ENCODE measurements at regions of chr5 and their contacts with region 1.

Region 1: GRCh38 chr5:149114403-149115312 is 26.6 kb upstream of the ABLIM3 start:
- DNase-seq: peak; percentile 20 to 73 (median 28)
- ATAC-seq: peak; percentile 100
- H3K4me3 ChIP-seq: no peak overlapping the region
- H3K27ac ChIP-seq: no peak overlapping the region
- H3K4me1 ChIP-seq: no peaks in the 10 kb centered on the region
- H3K27me3 ChIP-seq: peaks cover 0 to 5% of the 10 kb centered on the region in 2 experiments; a peak in 1 of 5 replicates
- CTCF ChIP-seq: peak; percentile 78 to 87 (median 80)
- EP300 ChIP-seq: no peak
- POLR2A ChIP-seq: no peak
- RAD21 ChIP-seq: peak; percentile 94 to 95

Region 2: DNA sequence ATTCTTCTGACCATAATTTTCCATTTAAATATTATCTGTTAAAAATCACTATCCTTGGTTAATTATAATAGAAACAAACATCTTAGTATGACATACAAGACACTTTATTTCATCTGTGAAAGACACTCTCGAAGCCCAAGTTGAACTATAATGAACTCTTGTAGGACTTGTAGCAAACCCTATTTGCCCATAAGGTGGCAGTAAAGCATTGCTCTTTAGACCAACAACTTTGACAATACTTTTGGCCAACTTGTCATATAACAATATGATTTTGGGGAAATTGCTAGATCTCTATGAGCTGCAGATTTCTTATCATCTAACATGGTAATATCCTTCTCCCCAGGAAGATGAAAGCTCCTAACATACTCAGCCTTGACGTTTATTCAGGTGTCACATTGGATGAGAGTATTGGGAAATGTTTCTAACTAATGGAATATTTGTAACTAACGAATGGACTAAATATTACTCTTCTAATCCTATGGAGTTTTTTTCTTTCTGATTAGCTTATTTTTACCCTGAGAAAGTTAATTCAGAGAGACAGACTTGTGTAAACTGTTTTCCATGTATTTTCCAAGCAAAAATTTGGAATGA is 935.3 kb before region 1 on chr5:
- CTCF ChIA-PET with region 1: no interaction called
- POLR2A ChIA-PET with region 1: no interaction called
- in situ Hi-C with region 1: no loop called
- intact Hi-C with region 1: loop called (anchors 10 kb)
- DNase-seq: peak in 3 of 4 experiments; percentile 6 to 67 (median 6)
- ATAC-seq: peak; percentile 67; the same call in 2 of the 3 replicates
- H3K4me3 ChIP-seq: no peak overlapping the region
- H3K27ac ChIP-seq: no peak overlapping the region
- H3K4me1 ChIP-seq: no peaks in the 10 kb centered on the region
- H3K27me3 ChIP-seq: no peaks in the 10 kb centered on the region
- CTCF ChIP-seq: peak; percentile 48 to 71 (median 61); a peak in 5 of 6 replicates
- EP300 ChIP-seq: no peak
- POLR2A ChIP-seq: no peak
- RAD21 ChIP-seq: peak; percentile 89

Region 3: GRCh38 chr5:148904440-148904839 is 210.2 kb before region 1 on chr5:
- CTCF ChIA-PET with region 1: no interaction called
- POLR2A ChIA-PET with region 1: no interaction called
- in situ Hi-C with region 1: loop called (anchors 10 kb)
- intact Hi-C with region 1: no loop called
- DNase-seq: no peak
- ATAC-seq: no peak
- H3K4me3 ChIP-seq: no peak overlapping the region
- H3K27ac ChIP-seq: no peak overlapping the region
- H3K4me1 ChIP-seq: no peaks in the 10 kb centered on the region
- H3K27me3 ChIP-seq: peaks cover 0 to 3% of the 10 kb centered on the region in 2 experiments; a peak in 2 of 5 replicates
- CTCF ChIP-seq: no peak
- EP300 ChIP-seq: no peak
- POLR2A ChIP-seq: no peak
- RAD21 ChIP-seq: no peak

Region 4: GRCh38 chr5:148963664-148964063 is 151.0 kb before region 1 on chr5:
- CTCF ChIA-PET with region 1: no interaction called
- POLR2A ChIA-PET with region 1: no interaction called
- in situ Hi-C with region 1: no loop called
- intact Hi-C with region 1: loop called (anchors 5 kb)
- DNase-seq: no peak
- ATAC-seq: no peak
- H3K4me3 ChIP-seq: no peak overlapping the region
- H3K27ac ChIP-seq: no peak overlapping the region
- H3K4me1 ChIP-seq: no peaks in the 10 kb centered on the region
- H3K27me3 ChIP-seq: peaks cover 3 to 6% of the 10 kb centered on the region in 2 experiments; a peak in 4 of 5 replicates
- CTCF ChIP-seq: no peak
- EP300 ChIP-seq: no peak
- POLR2A ChIP-seq: no peak
- RAD21 ChIP-seq: no peak

Region 5: DNA sequence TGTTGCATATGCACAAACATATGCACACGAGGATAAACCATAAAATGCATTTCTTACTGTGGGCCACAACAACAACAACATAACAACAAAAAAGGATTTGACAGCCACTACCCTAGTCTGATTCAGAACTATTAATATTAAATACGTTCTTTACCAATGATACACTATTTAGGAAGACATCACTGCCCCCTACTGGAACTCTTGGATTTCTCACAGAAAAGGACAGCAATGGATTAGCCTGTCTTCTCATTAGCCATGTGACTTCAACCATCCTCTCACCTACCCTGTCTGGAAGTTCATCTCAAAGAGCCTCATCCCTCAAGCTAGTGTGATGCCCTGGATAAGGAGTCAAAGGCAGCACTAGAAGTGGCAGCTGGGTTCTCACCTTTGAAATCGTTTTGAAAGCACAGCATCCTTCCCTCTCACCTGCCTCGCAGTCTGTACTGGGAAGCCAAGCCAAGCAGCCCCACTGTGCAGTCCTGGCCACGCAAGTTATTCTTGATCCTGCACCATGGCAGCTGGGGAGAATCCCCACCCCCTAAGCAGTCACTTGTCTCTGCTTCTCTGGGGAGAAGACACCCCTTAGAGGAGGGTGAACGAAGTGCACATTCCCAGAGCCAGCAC is 116.4 kb before region 1 on chr5:
- CTCF ChIA-PET with region 1: no interaction called
- POLR2A ChIA-PET with region 1: no interaction called
- in situ Hi-C with region 1: no loop called
- intact Hi-C with region 1: loop called (anchors 2 kb)
- DNase-seq: peak; percentile 16 to 51 (median 21)
- ATAC-seq: peak; percentile 87
- H3K4me3 ChIP-seq: no peak overlapping the region
- H3K27ac ChIP-seq: no peak overlapping the region
- H3K4me1 ChIP-seq: no peaks in the 10 kb centered on the region
- H3K27me3 ChIP-seq: no peaks in the 10 kb centered on the region
- CTCF ChIP-seq: peak; percentile 48 to 70 (median 57); a peak in 5 of 6 replicates
- EP300 ChIP-seq: no peak
- POLR2A ChIP-seq: no peak
- RAD21 ChIP-seq: peak; percentile 61 to 67

Region 6: GRCh38 chr5:149035372-149035790 is 79.3 kb before region 1 on chr5:
- CTCF ChIA-PET with region 1: no interaction called
- POLR2A ChIA-PET with region 1: no interaction called
- in situ Hi-C with region 1: no loop called
- intact Hi-C with region 1: loop called (anchors 2 kb)
- DNase-seq: peak; percentile 52 to 74 (median 56)
- ATAC-seq: peak; percentile 99
- H3K4me3 ChIP-seq: no peak overlapping the region
- H3K27ac ChIP-seq: no peak overlapping the region
- H3K4me1 ChIP-seq: no peaks in the 10 kb centered on the region; a peak in 1 of 5 replicates
- H3K27me3 ChIP-seq: peaks cover 0 to 16% of the 10 kb centered on the region in 2 experiments; a peak in 3 of 5 replicates
- CTCF ChIP-seq: peak; percentile 84 to 90 (median 90)
- EP300 ChIP-seq: no peak
- POLR2A ChIP-seq: no peak
- RAD21 ChIP-seq: peak; percentile 88 to 89

Region 7: GRCh38 chr5:149517461-149518122 is 402.9 kb after region 1 on chr5:
- CTCF ChIA-PET with region 1: no interaction called
- POLR2A ChIA-PET with region 1: no interaction called
- in situ Hi-C with region 1: no loop called
- intact Hi-C with region 1: no loop called
- DNase-seq: no peak
- ATAC-seq: peak; percentile 19; the same call in 1 of the 3 replicates
- H3K4me3 ChIP-seq: no peak overlapping the region
- H3K27ac ChIP-seq: no peak overlapping the region
- H3K4me1 ChIP-seq: peaks cover 0 to 15% of the 10 kb centered on the region in 2 experiments; a peak in 3 of 5 replicates
- H3K27me3 ChIP-seq: no peaks in the 10 kb centered on the region
- CTCF ChIP-seq: no peak
- EP300 ChIP-seq: no peak
- POLR2A ChIP-seq: no peak
- RAD21 ChIP-seq: no peak

Measured in K562 (cell line).